ENCODE measurements at regions of chr5 and their contacts with region 1.

Region 1: DNA sequence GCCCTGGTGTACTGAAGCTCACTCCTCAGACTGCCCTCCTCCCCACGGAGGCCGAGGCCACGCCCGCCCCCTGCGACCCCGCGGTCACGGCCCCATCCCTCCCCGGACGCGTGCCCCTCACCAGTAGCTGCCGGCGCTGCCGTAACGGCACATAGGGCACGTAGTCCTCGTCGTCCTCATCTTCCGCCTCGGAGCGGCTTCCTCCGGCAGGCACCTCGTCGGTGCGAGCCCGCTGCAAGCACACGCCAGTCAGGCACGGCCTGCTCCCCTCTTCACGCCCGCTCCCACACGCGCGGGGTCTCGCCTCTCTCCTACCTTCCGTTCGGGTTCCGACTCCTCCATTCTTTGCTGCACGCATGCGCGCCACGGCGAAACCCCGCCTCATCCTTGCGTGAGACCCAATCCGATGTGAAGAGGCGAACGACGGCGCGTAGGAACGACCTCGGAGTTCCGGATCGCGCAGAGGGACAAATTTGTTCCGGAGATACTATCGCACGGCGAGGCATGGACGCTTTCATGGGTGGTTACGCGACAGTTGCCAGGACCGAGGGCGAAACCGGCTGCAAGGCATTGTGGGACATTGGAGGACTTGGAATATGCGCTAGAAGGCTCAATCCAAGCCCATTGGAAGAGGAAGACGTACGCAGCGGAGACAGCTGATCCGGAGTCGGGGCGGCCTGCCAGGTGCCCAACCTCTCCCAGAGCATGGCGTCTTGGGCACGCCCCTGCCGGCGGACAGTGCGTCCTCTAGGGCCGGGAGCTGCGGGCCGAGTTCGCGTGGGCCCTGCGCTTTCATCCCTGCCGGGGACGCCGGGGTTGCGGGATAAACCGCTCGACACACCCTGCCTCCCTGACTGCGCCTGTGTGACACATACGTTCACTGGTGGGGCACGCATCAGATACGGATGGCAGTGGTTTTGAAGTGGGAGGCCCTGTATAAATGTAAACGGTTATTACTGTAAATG is at the start of gene DDX41:
- DNase-seq: peak; percentile 95 to 99 (median 98)

Region 2: GRCh38 chr5:177554474-177555111 is 37.7 kb after region 1 on chr5 and contains the start of gene FAM193B:
- intact Hi-C with region 1: loop called (anchors 2 kb)
- DNase-seq: peak; percentile 90 to 99 (median 95)

Region 3: GRCh38 chr5:177599731-177600507 is 83.0 kb after region 1 on chr5 and contains the start of gene B4GALT7:
- intact Hi-C with region 1: loop called (anchors 2 kb)
- DNase-seq: peak; percentile 58 to 97 (median 82)

Measured in posterior cingulate gyrus (tissue), 11 donors.